Pancreas (tissue), 10 donors: ENCODE measurements at regions of chr9 and their contacts with region 1.

Region 1: GRCh38 chr9:130712564-130713285 is 19.1 kb downstream of the EXOSC2 start:
- DNase-seq: peak; percentile 95 to 99 (median 98)
- ATAC-seq: peak; percentile 96 to 98 (median 96)
- H3K4me3 ChIP-seq: peak overlapping the region; percentile 86 to 97 (median 90)
- H3K27ac ChIP-seq: peak overlapping the region; percentile 91 to 99 (median 98)
- H3K4me1 ChIP-seq: peaks cover 7 to 22% (median 10%) of the 10 kb centered on the region in 3 donors
- H3K27me3 ChIP-seq: no peaks in the 10 kb centered on the region
- CTCF ChIP-seq: no peak

Region 2: GRCh38 chr9:130770679-130771442 is 58.1 kb after region 1 on chr9:
- intact Hi-C with region 1: loop called in 1 of 3 experiments (anchors 10 kb)
- DNase-seq: no peak
- ATAC-seq: peak; percentile 55 to 86 (median 84)
- H3K4me3 ChIP-seq: no peak overlapping the region
- H3K27ac ChIP-seq: no peak overlapping the region
- H3K4me1 ChIP-seq: peaks cover 0 to 13% (median 5%) of the 10 kb centered on the region in 3 donors
- H3K27me3 ChIP-seq: no peaks in the 10 kb centered on the region
- CTCF ChIP-seq: peak in 2 of 4 donors; percentile 24 to 28

Region 3: DNA sequence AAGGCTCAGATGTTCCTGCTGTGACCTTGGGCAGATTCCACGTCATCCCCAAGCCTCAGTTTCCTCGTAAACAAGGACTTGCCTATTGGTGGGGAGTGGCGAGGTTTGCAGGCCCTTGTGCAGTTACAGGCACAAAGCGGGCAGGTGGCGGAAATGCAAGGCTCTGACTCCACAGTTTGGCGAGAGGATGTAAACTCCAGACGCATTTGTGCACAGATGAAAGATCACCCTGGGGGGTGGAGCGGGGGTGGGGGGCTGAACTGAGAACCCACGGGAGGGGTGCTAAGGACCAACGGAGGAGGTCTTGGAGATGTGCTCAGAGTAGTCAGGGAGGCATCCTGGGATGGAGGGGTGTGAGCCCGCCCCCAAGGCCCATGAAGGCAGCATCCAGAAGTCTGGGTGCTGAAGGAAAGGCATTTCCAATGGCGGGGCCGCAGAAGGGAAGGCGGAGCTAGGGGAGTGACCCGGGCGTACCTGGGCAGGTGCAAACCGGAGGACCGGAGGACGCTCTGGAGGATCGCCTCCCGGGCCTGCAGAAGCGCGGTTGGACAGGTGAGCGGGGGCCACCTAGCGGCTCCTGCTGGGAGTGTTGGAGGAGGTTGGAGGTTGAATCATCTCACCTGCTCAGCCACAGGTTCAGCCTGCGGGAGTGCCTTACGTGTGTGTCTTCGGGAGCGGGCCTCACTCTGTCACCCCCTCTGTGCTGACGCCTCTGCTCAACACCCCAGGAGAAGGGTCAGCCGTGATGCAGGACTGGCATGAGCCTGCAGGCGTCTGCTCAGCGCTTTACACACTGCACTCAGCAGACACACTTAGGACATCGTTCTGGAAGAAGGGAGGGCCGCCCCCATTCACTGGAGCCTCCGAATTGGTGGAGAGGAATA is 228.2 kb after region 1 on chr9:
- intact Hi-C with region 1: loop called in 1 of 3 experiments (anchors 5 kb)
- DNase-seq: peak; percentile 77 to 96 (median 89)
- ATAC-seq: peak; percentile 95 to 98 (median 96)
- H3K4me3 ChIP-seq: no peak overlapping the region
- H3K27ac ChIP-seq: no peak overlapping the region
- H3K4me1 ChIP-seq: peaks cover 3 to 7% (median 4%) of the 10 kb centered on the region in 3 donors
- H3K27me3 ChIP-seq: peaks cover 0 to 28% (median 14%) of the 10 kb centered on the region in 4 donors
- CTCF ChIP-seq: peak; percentile 79 to 88 (median 81)